ENCODE measurements at regions of chr15 and their contacts with region 1.

Region 1: DNA sequence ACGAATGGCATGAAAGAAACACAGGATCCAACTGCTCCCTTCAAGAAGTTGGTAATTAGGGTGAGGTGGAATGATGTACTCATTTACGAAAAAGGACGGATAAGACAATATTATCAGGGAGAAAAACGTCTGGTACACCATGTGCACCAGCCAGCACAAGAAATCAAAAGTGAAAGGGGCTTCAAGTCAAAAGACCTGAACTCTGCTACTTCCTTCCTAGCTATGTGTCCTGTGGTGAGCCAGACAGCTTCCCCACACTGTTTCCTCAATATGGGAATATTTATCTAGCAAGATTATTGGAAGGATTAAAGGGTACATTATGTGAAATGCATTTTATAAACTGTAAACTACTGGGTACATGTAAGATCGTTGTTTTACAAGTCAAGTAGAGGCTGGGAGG is 33.9 kb downstream of the RAB27A start:
- DNase-seq: no peak
- ATAC-seq: peak; percentile 40
- H3K4me3 Mint-ChIP-seq: peak overlapping the region; percentile 72
- H3K27ac Mint-ChIP-seq: peak overlapping the region; percentile 89
- H3K4me1 Mint-ChIP-seq: peaks cover 78% of the 10 kb centered on the region
- H3K27me3 Mint-ChIP-seq: no peaks in the 10 kb centered on the region
- CTCF ChIP-seq: no peak

Region 2: DNA sequence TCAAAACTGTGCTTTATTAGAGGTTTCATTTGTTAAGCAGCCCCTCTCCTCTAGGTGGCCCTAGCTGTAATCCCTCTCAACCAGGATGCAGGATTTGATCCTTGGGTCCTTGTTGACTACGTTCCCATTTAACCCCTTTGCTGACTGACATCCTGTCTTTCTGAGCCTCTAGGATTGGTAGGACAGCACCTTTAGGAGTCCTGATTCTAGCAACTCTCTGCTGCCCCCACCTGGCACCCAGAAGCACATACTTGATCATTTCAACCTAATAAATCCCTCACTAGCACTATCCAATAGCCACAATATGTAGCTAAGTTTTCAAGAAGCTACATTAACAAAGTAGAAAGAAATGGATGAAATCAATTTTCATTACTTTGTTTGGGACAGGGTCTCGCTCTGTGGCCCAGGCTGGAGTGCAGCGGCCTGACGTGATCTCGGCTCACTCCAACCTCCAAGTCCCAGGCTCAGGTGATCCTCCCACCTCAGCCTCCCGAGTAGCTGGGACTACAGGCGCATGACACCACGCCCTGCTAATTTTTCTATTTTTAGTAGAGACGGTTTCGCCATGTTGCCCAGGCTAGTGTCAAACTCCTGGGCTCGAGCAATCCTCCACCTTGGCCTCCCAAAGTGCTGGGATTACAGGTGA is 87.3 kb before region 1 on chr15:
- CTCF ChIA-PET with region 1: no interaction called
- POLR2A ChIA-PET with region 1: no interaction called
- intact Hi-C with region 1: no loop called
- DNase-seq: peak; percentile 72
- ATAC-seq: peak; percentile 90
- H3K4me3 Mint-ChIP-seq: no peak overlapping the region
- H3K27ac Mint-ChIP-seq: no peak overlapping the region
- H3K4me1 Mint-ChIP-seq: no peaks in the 10 kb centered on the region
- H3K27me3 Mint-ChIP-seq: no peaks in the 10 kb centered on the region
- CTCF ChIP-seq: peak; percentile 94

Region 3: DNA sequence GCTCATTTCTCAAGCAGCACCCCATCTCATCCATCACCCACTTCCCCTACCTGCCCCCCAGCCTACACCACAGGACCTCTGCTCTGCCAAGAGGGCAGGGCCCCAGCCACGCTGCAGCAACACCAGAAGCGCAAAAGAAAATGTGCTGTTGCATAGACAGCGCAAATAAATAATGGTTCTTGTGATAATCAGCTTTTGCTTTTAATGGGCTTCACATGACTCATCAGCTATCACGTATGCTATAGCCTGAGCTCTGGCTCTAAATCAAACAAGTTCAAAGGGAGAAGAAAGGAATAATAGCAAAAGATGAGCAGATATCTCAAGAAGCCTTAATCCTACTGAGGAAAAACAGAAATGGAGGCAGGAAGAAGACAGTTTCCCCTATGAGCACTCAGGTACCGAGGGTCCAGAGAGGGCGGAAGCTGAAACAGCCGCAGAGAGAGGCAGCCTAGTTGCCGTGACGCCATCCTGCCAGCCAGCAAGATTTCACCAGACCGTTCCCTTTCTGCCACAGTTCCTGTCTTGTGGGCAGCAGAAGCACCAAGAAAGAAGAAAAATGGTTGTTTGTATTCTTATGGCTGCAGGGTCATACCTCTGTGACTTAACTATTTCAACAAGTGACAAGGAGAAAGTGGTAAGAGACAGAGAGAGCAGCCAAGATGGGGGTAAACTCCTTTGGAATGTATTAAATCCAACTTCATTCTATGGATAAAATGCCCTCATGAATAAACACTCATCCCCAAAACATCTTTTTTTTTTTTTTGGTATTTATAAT is 11.9 kb after region 1 on chr15:
- CTCF ChIA-PET with region 1: interaction called, 11 read pairs
- POLR2A ChIA-PET with region 1: interaction called, 12 read pairs
- intact Hi-C with region 1: no loop called
- DNase-seq: peak; percentile 87
- ATAC-seq: peak; percentile 91
- H3K4me3 Mint-ChIP-seq: peak overlapping the region; percentile 72
- H3K27ac Mint-ChIP-seq: peak overlapping the region; percentile 99
- H3K4me1 Mint-ChIP-seq: peaks cover 77% of the 10 kb centered on the region
- H3K27me3 Mint-ChIP-seq: no peaks in the 10 kb centered on the region
- CTCF ChIP-seq: no peak

Region 4: DNA sequence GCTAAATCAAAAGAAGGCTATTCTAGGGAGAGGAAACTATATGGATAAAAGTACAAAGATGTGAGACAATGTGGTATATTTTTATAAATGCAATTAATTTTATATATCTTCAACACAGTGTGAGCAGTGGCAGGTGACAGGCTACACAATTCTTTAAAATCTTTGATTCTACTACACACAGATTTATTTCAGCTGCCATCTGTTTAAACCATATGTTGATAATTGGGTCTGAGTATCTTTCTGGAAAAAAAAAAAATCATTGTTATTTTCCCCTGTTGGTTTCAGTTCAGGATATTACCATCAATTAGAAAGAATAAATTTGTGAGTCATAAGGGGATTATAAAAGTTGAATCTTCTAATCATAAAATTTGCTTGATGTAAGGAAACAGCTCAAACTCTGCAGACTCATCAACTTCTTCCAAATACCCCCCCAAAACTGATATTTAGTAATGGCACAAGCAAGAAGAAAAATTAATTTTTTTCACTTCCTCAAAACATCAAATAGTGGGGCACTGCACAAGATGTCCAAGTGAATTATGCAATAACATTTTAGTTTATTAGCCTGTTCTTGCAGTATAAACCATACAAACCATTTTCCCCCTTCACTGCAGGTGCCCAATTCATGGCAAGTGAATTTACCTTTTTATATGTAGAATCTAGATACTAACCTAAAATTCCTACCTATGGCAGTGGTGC is 164.6 kb after region 1 on chr15:
- CTCF ChIA-PET with region 1: no interaction called
- POLR2A ChIA-PET with region 1: no interaction called
- intact Hi-C with region 1: no loop called
- DNase-seq: no peak
- ATAC-seq: no peak
- H3K4me3 Mint-ChIP-seq: no peak overlapping the region
- H3K27ac Mint-ChIP-seq: no peak overlapping the region
- H3K4me1 Mint-ChIP-seq: no peaks in the 10 kb centered on the region
- H3K27me3 Mint-ChIP-seq: no peaks in the 10 kb centered on the region
- CTCF ChIP-seq: no peak

Measured in activated CD8-positive, alpha-beta T cell treated with anti-CD3 and anti-CD28 coated beads for 36 hours (primary cell).